ENCODE measurements at regions of chr1 and their contacts with region 1.

Region 1: GRCh38 chr1:58727363-58727762 is 27.5 kb upstream of the MYSM1 start:
- DNase-seq: peak; percentile 98
- ATAC-seq: peak; percentile 97
- H3K4me3 ChIP-seq: peak overlapping the region; percentile 28; the same call in 1 of the 2 replicates
- H3K27ac ChIP-seq: peak overlapping the region; percentile 77
- H3K4me1 ChIP-seq: peaks cover 21% of the 10 kb centered on the region
- H3K27me3 ChIP-seq: no peaks in the 10 kb centered on the region
- CTCF ChIP-seq: no peak

Region 2: GRCh38 chr1:58628987-58629598 is 98.3 kb before region 1 on chr1:
- CTCF ChIA-PET with region 1: no interaction called
- POLR2A ChIA-PET with region 1: no interaction called
- intact Hi-C with region 1: no loop called
- DNase-seq: peak; percentile 19
- ATAC-seq: no peak
- H3K4me3 ChIP-seq: no peak overlapping the region
- H3K27ac ChIP-seq: no peak overlapping the region
- H3K4me1 ChIP-seq: no peaks in the 10 kb centered on the region
- H3K27me3 ChIP-seq: no peaks in the 10 kb centered on the region
- CTCF ChIP-seq: no peak

Region 3: DNA sequence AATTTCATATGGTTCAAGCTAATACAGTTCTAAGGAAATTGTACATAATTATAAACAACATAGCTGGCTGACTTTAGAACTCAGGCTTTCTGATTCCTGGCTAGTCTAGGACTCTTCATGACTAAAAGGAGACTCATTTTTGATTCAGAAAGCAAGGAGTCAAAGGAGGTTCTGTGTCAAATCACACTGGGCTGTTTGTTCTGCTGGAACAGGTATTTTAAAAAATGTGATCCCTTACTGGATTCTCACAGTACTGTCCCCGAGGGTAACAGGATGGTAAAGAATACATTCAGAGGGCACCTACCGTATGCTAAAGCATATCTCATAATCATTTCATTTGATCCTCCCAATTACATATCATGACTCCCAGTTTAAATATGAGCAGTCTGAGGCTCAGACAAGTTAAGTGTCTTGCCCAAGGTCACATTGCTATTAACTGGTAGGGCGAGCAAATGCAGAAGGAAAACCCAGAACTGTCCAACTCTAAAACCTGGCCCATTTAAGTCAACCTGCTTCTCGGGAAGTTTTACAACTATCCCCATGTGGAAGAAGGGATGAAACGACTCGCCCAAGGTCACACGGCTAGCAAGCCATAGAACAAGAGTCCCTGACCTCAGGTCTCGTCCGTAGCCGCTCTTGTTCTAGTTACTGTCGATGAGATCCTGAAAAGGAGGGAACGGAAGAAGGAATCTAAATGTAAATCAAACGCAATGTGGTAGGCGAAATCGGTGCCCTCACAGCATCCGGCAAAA is 28.2 kb before region 1 on chr1:
- CTCF ChIA-PET with region 1: interaction called, 3 read pairs
- POLR2A ChIA-PET with region 1: no interaction called
- intact Hi-C with region 1: loop called (anchors 2 kb)
- DNase-seq: peak; percentile 13
- ATAC-seq: peak; percentile 37
- H3K4me3 ChIP-seq: peak overlapping the region; percentile 95
- H3K27ac ChIP-seq: peak overlapping the region; percentile 27
- H3K4me1 ChIP-seq: peaks cover 7% of the 10 kb centered on the region
- H3K27me3 ChIP-seq: no peaks in the 10 kb centered on the region
- CTCF ChIP-seq: no peak

Region 4: DNA sequence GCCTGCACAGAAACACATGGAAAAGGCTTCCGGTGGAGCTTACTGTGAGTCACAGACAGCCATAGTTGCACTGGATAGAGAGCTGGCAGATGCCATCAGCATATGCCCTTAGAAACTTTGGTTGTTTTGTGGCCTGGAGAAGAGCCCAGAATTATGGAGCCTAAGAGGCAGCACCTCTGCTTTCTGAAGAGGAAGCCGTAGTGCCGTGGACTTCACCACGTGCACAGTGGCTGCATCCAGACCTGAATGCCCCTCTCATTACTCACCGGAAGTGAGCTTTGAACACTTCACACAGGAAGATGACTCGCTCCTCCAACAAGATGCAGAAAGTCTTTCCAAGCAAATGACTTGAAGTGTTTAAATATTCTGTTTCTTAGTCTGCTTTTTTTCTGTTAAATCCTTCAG is 28.1 kb after region 1 on chr1:
- CTCF ChIA-PET with region 1: no interaction called
- POLR2A ChIA-PET with region 1: no interaction called
- intact Hi-C with region 1: loop called (anchors 1 kb)
- DNase-seq: peak; percentile 99
- ATAC-seq: peak; percentile 94
- H3K4me3 ChIP-seq: no peak overlapping the region
- H3K27ac ChIP-seq: peak overlapping the region; percentile 87
- H3K4me1 ChIP-seq: peaks cover 41% of the 10 kb centered on the region
- H3K27me3 ChIP-seq: no peaks in the 10 kb centered on the region
- CTCF ChIP-seq: no peak